Activated naive CD4-positive, alpha-beta T cell treated with anti-CD3 and anti-CD28 coated beads for 36 hours (primary cell): ENCODE measurements at regions of chr1 and their contacts with region 1.

Region 1: DNA sequence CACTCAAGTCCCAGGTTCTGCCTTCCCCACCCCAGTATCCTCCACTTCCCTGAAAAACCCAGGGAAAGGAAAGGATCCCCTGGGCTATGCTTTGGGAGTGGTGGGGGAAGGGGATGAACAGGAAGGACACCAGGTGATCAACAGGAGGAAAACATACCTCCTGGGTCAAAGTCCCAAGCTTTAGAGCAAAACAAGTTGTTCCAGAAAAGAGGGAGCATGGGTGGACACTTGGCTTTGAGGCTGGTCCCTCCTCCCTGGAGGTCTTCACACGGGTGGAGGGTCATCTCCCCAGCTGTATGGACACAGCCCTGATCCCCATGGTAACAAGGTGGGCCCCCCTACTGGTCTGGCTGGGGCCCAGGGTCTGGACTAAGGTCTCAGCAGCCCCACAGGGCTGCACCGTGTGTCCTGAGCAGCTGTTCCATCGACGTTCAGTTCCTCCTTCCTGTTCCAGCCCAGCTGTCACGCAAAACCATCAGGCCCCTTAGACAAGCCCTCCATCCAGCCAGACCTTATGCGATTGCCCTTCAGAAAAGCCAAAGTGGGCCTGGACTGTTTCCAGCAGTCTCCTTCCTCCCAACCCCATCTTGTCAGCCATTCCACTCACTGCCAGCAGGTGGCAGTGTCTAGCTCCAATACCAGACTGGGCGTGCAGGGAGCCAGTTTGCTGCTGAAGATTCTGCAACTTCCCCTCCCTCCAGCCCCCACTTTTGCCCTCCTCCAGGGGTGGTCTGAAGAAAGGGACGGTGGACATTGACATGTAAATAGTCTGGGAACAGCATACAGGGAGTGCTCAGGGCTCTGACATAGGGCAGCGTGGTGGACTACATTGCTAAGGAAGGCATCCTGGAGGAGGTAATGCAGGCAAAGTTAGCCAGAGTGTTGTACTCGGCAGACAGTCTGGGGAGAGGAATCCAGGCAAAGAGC is 2.9 kb upstream of the PDZK1IP1 start:
- DNase-seq: peak; percentile 79
- H3K4me3 Mint-ChIP-seq: no peak overlapping the region
- H3K27ac Mint-ChIP-seq: no peak overlapping the region
- H3K4me1 Mint-ChIP-seq: no peaks in the 10 kb centered on the region
- H3K27me3 Mint-ChIP-seq: no peaks in the 10 kb centered on the region

Region 2: DNA sequence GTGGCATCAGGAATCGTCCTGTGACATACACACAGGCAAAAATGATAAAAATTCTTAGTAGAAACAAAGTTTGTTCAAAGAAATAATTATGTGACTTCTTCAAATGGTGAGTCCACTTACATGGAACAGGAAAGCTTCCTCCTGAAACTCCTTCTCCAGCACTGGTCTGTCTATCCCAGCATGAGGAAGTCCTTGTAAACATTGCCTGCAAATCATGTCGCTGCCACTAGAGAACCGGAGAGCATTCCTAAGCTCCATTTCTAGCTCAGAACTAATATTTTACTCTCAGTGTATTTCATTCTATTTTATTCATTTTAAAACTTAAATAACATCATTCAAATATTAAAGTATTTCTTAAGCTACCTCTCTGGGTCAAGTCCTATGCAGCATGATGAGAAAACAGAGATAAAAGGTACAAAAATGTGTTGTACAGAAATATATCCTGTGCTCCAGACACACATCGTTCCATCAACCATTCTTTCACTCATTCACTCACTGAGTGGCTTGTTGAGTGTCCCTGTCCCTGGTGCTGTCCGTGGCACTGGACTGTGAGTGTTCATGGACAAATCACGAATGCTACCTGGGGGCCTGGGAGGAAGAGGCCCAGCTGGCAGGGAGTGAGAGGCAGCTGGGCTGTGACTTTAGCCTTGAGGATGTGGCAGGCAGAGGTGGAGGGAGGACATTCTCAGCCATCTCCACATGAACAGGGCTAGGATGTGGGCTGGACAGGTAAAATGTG is 45.5 kb before region 1 on chr1:
- CTCF ChIA-PET with region 1: no interaction called
- intact Hi-C with region 1: no loop called
- DNase-seq: no peak
- H3K4me3 Mint-ChIP-seq: no peak overlapping the region
- H3K27ac Mint-ChIP-seq: no peak overlapping the region
- H3K4me1 Mint-ChIP-seq: no peaks in the 10 kb centered on the region
- H3K27me3 Mint-ChIP-seq: peaks cover 15% of the 10 kb centered on the region

Region 3: GRCh38 chr1:47211796-47212269 is 19.1 kb after region 1 on chr1:
- CTCF ChIA-PET with region 1: no interaction called
- intact Hi-C with region 1: no loop called
- DNase-seq: no peak
- H3K4me3 Mint-ChIP-seq: no peak overlapping the region
- H3K27ac Mint-ChIP-seq: no peak overlapping the region
- H3K4me1 Mint-ChIP-seq: no peaks in the 10 kb centered on the region
- H3K27me3 Mint-ChIP-seq: peaks cover 4% of the 10 kb centered on the region

Region 4: DNA sequence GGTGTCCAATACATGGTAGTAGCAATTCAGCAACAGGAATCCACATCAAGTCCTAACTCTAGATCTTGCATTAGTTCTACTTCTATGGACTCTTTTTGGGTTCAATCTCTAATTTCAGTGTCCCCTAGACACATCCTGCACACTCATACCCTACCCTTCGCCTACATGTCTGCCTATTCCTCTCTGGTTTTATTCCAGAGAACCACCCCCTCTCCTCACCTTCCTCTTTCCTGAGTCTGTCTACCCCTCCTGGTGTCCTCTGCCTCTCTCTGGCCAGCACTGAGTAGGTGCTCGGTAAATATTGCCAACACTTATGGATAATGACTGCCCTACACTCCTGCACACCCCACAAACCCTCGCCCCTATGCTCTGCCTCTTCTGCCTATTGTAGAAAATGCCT is 29.8 kb after region 1 on chr1:
- CTCF ChIA-PET with region 1: interaction called, 11 read pairs
- intact Hi-C with region 1: no loop called
- DNase-seq: no peak
- H3K4me3 Mint-ChIP-seq: no peak overlapping the region
- H3K27ac Mint-ChIP-seq: no peak overlapping the region
- H3K4me1 Mint-ChIP-seq: peaks cover 5% of the 10 kb centered on the region
- H3K27me3 Mint-ChIP-seq: peaks cover 20% of the 10 kb centered on the region

Region 5: GRCh38 chr1:47313915-47314664 is 121.4 kb after region 1 on chr1 and contains the start of gene STIL:
- CTCF ChIA-PET with region 1: no interaction called
- intact Hi-C with region 1: loop called (anchors 5 kb)
- DNase-seq: peak; percentile 99
- H3K4me3 Mint-ChIP-seq: peak within 1 kb of the TSS; percentile 96
- H3K27ac Mint-ChIP-seq: peak within 1 kb of the TSS; percentile 95
- H3K4me1 Mint-ChIP-seq: peaks cover 10% of the 10 kb centered on the region
- H3K27me3 Mint-ChIP-seq: no peaks in the 10 kb centered on the region
- total RNA-seq, gene STIL: 41.4 to 43.5 TPM

Region 6: DNA sequence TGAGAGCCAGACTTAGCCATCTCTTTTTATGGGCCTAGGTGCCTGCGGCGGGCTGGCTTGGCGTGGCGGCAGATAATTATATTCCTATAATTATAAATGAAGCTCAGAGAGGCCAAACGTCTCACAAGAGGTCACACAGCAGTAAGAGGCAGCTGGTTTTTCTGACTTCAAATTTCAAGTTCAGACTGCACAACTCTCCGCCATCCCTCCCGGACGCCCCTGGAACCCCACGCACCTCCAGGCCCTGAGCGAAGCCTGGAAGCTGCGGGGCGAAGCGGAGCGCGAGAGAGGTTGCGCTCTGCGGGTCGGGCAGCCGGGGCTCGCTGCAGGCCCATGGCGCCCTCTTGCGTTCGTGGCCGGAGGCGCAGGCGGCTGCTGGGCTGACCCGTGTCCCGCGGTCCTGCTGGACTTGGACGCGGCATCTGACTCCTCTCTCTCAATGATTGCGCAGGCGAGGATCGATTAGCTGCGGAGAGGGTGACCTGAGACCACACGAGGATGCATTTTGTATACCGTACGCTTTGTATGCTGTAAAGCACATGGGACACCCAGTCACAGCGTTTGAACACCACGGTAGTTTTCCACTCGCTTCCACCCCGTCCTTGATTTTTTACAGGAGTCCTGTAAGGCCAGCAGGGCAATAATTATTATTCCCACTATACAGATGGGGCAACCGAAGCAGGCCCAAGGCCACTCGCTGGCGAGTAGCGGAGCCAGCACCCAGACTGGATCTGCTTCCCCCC is 517.8 kb after region 1 on chr1:
- CTCF ChIA-PET with region 1: interaction called, 4 read pairs
- intact Hi-C with region 1: loop called (anchors 5 kb)
- DNase-seq: peak; percentile 68
- H3K4me3 Mint-ChIP-seq: no peak overlapping the region
- H3K27ac Mint-ChIP-seq: no peak overlapping the region
- H3K4me1 Mint-ChIP-seq: peaks cover 3% of the 10 kb centered on the region
- H3K27me3 Mint-ChIP-seq: peaks cover 71% of the 10 kb centered on the region